SK-N-SH (cell line): ENCODE measurements at regions of chr12 and their contacts with region 1.

Region 1: GRCh38 chr12:32947206-32948067 is 50.9 kb upstream of the PKP2 start:
- DNase-seq: peak; percentile 54
- H3K4me3 ChIP-seq: no peak overlapping the region
- H3K27ac ChIP-seq: no peak overlapping the region
- H3K4me1 ChIP-seq: no peaks in the 10 kb centered on the region
- H3K27me3 ChIP-seq: no peaks in the 10 kb centered on the region
- CTCF ChIP-seq: peak; percentile 39
- EP300 ChIP-seq: no peak
- RAD21 ChIP-seq: peak; percentile 74

Region 2: DNA sequence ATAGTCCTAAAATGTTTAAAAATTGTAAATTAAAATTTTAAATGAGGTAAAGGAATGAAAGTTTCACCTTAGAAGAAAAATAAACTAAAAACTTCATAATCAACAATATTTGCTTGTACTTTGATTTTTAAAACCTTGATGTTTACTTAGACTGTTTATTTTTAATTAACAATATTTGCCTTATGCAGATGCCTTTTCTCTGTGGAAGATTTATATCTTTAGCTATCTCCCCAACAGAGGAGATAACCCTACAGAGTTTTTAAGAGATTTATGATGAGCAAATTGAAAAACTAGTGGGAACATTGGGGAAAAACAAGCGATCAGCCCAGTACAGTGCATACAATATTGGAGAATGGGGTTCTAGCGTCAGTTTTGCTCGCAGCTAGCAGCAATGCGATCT is 76.3 kb after region 1 on chr12:
- CTCF ChIA-PET with region 1: no interaction called
- POLR2A ChIA-PET with region 1: no interaction called
- DNase-seq: no peak
- H3K4me3 ChIP-seq: no peak overlapping the region
- H3K27ac ChIP-seq: no peak overlapping the region
- H3K4me1 ChIP-seq: no peaks in the 10 kb centered on the region
- H3K27me3 ChIP-seq: no peaks in the 10 kb centered on the region
- CTCF ChIP-seq: no peak
- EP300 ChIP-seq: no peak
- RAD21 ChIP-seq: no peak

Region 3: DNA sequence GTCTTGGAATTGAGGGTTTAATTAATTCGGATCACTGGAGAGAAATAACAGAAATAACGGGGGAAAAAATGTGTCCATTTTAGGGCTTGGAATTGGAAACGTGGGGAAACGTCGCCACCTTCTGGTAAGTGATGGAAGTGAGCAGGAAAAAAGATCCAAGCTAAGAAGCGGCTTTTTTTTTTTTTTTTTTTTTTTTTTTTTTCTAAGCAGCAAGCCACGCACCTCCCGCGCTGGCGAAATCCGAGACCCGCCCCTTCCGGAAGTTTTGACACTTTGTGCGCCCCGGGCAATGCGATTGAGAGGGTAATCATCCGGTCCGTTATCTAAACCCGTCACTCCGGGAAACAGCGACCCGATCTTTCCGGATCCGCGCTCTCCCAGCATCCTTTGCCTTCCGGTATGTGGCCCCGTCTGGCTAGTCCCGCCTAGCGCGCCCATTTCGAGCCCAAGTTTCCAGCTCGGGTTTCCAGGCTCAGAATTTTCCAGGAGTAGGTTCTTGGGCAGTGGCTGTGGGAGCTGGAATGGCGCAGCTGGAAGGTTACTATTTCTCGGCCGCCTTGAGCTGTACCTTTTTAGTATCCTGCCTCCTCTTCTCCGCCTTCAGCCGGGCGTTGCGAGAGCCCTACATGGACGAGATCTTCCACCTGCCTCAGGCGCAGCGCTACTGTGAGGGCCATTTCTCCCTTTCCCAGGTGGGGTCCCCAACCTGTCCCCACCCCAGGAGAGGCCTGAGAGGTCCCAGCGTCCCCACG is 1074.8 kb after region 1 on chr12 and contains the start of gene ALG10:
- CTCF ChIA-PET with region 1: interaction called, 17 read pairs
- POLR2A ChIA-PET with region 1: no interaction called
- DNase-seq: peak; percentile 72
- H3K4me3 ChIP-seq: peak within 1 kb of the TSS; percentile 80 to 99
- H3K27ac ChIP-seq: peak within 1 kb of the TSS; percentile 52 to 67; a peak in 3 of 4 replicates
- H3K4me1 ChIP-seq: peaks cover 0 to 3% of the 10 kb centered on the region in 2 experiments; a peak in 1 of 4 replicates
- H3K27me3 ChIP-seq: no peaks in the 10 kb centered on the region
- CTCF ChIP-seq: peak; percentile 76
- EP300 ChIP-seq: peak in 1 of 2 experiments; percentile 50; a peak in 2 of 4 replicates
- RAD21 ChIP-seq: peak; percentile 77
- polyA plus RNA-seq, gene ALG10: 2.3 and 2.8 TPM in 2 replicates